ENCODE measurements at regions of chr5 and their contacts with region 1.

Region 1: GRCh38 chr5:28014779-28015178 is 976.4 kb upstream of the CDH9 start:
- DNase-seq: no peak
- ATAC-seq: no peak
- H3K4me3 ChIP-seq: no peak overlapping the region
- H3K27ac ChIP-seq: no peak overlapping the region
- H3K4me1 ChIP-seq: no peaks in the 10 kb centered on the region
- H3K27me3 ChIP-seq: no peaks in the 10 kb centered on the region
- CTCF ChIP-seq: peak; percentile 45 to 58 (median 47); a peak in 4 of 6 replicates
- EP300 ChIP-seq: no peak
- POLR2A ChIP-seq: no peak
- RAD21 ChIP-seq: no peak

Region 2: GRCh38 chr5:27124590-27124989 is 890.2 kb before region 1 on chr5:
- CTCF ChIA-PET with region 1: no interaction called
- POLR2A ChIA-PET with region 1: no interaction called
- RAD21 ChIA-PET with region 1: no interaction called
- SMC1A ChIA-PET with region 1: no interaction called
- in situ Hi-C with region 1: no loop called
- intact Hi-C with region 1: loop called (anchors 10 kb)
- DNase-seq: no peak
- ATAC-seq: no peak
- H3K4me3 ChIP-seq: no peak overlapping the region
- H3K27ac ChIP-seq: no peak overlapping the region
- H3K4me1 ChIP-seq: no peaks in the 10 kb centered on the region
- H3K27me3 ChIP-seq: no peaks in the 10 kb centered on the region
- CTCF ChIP-seq: peak in 1 of 3 experiments; percentile 8; a peak in 1 of 6 replicates
- EP300 ChIP-seq: no peak
- POLR2A ChIP-seq: no peak
- RAD21 ChIP-seq: no peak

Region 3: DNA sequence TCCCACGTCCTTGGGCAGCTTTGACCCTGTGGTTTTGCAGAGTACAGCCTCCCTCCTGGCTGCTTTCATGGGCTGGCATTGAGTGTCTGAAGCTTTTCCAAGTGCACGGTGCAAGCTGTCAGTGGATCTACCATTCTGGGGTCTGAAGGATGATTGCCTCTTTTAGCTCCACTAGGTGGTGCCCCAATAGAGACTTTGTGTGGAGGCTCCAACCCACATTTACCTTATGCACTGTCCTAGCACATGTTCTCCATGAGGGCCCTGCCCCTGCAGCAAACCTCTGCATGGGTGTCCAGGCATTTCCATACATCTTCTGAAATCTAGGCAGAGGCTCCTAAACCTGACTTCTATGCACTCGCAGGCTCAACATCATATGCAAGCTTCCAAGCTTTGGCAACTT is 332.2 kb before region 1 on chr5:
- CTCF ChIA-PET with region 1: interaction called, 6 read pairs
- POLR2A ChIA-PET with region 1: no interaction called
- RAD21 ChIA-PET with region 1: no interaction called
- SMC1A ChIA-PET with region 1: no interaction called
- in situ Hi-C with region 1: no loop called
- intact Hi-C with region 1: loop called (anchors 10 kb)
- DNase-seq: no peak
- ATAC-seq: peak; percentile 39; the same call in 1 of the 3 replicates
- H3K4me3 ChIP-seq: no peak overlapping the region
- H3K27ac ChIP-seq: no peak overlapping the region
- H3K4me1 ChIP-seq: no peaks in the 10 kb centered on the region
- H3K27me3 ChIP-seq: no peaks in the 10 kb centered on the region
- CTCF ChIP-seq: peak in 1 of 3 experiments; percentile 12; a peak in 1 of 6 replicates
- EP300 ChIP-seq: no peak
- POLR2A ChIP-seq: no peak
- RAD21 ChIP-seq: no peak

Measured in GM12878 (cell line).